CD8-positive, alpha-beta memory T cell (primary cell): ENCODE measurements at regions of chr14 and their contacts with region 1.

Region 1: GRCh38 chr14:100221533-100222223 is 17.3 kb upstream of the YY1 start:
- DNase-seq: peak; percentile 45 to 79 (median 58)
- H3K4me3 ChIP-seq: peak overlapping the region; percentile 80
- H3K4me3 Mint-ChIP-seq: no peak overlapping the region
- H3K27ac ChIP-seq: peak overlapping the region; percentile 49
- H3K27ac Mint-ChIP-seq: no peak overlapping the region
- H3K4me1 ChIP-seq: peaks cover 47% of the 10 kb centered on the region
- H3K4me1 Mint-ChIP-seq: peaks cover 5 to 6% (median 6%) of the 10 kb centered on the region in 3 donors
- H3K27me3 ChIP-seq: no peaks in the 10 kb centered on the region
- H3K27me3 Mint-ChIP-seq: no peaks in the 10 kb centered on the region

Region 2: GRCh38 chr14:100234511-100234910 is 12.8 kb after region 1 on chr14:
- CTCF ChIA-PET with region 1: interaction called, 15 read pairs
- POLR2A ChIA-PET with region 1: interaction called, 10 read pairs
- DNase-seq: peak in 1 of 5 donors; percentile 41
- H3K4me3 ChIP-seq: no peak overlapping the region
- H3K4me3 Mint-ChIP-seq: peak overlapping the region in 1 of 7 donors; percentile 75
- H3K27ac ChIP-seq: no peak overlapping the region
- H3K27ac Mint-ChIP-seq: peak overlapping the region in 7 of 8 donors; percentile 47 to 94 (median 81)
- H3K4me1 ChIP-seq: peaks cover 38% of the 10 kb centered on the region
- H3K4me1 Mint-ChIP-seq: peaks cover 32 to 52% (median 41%) of the 10 kb centered on the region in 3 donors
- H3K27me3 ChIP-seq: no peaks in the 10 kb centered on the region
- H3K27me3 Mint-ChIP-seq: peaks cover 0 to 1% of the 10 kb centered on the region in 2 donors

Region 3: DNA sequence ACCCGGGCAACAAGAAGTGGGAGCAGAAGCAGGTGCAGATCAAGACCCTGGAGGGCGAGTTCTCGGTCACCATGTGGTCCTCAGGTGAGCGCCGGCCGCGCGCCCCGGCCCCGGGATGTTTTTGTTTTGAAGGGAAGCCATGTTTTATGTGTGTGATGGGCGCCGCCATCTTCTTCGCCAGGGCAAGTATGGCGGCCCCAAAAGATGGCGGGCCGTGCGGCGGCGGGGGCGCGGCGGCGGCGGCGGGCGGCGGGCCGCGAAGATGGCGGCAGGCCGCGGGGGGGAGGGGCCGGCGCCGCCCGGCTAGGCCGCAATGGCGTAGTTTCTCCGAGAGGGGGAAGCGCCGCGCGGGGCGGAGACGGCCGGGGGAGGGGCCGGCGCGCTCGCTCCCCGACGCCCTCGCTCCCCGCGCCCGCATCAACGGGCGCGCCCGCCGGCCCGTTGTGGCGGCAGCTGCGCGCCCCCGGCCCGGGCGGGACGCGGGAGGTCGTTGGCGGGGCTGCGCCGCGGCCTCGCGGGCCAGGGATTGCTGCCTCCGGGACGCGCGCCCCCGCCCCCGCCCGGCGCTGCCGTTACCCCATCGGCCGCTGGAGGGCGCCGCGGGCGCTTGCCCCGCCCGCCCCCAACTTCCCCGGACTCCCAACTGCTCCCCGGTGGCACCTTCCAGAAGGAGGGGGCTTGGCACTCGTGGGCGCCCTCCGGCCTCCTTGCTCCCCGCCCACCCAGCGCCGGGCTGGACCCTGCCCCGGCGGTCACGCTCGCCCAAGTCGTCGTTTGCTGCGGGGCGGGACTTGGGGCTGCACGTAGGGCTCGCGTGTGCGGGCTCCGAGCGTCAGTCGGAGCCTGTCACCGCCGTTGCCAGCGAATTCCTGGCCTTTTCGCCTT is 18.4 kb after region 1 on chr14:
- CTCF ChIA-PET with region 1: interaction called, 15 read pairs
- POLR2A ChIA-PET with region 1: interaction called, 10 read pairs
- DNase-seq: peak; percentile 81 to 90 (median 84)
- H3K4me3 ChIP-seq: peak overlapping the region; percentile 72
- H3K4me3 Mint-ChIP-seq: peak overlapping the region; percentile 90 to 100 (median 93)
- H3K27ac ChIP-seq: peak overlapping the region; percentile 62
- H3K27ac Mint-ChIP-seq: peak overlapping the region; percentile 92 to 100 (median 96)
- H3K4me1 ChIP-seq: peaks cover 63% of the 10 kb centered on the region
- H3K4me1 Mint-ChIP-seq: peaks cover 49 to 70% (median 67%) of the 10 kb centered on the region in 3 donors
- H3K27me3 ChIP-seq: no peaks in the 10 kb centered on the region
- H3K27me3 Mint-ChIP-seq: peaks cover 0 to 1% of the 10 kb centered on the region in 2 donors

Region 4: DNA sequence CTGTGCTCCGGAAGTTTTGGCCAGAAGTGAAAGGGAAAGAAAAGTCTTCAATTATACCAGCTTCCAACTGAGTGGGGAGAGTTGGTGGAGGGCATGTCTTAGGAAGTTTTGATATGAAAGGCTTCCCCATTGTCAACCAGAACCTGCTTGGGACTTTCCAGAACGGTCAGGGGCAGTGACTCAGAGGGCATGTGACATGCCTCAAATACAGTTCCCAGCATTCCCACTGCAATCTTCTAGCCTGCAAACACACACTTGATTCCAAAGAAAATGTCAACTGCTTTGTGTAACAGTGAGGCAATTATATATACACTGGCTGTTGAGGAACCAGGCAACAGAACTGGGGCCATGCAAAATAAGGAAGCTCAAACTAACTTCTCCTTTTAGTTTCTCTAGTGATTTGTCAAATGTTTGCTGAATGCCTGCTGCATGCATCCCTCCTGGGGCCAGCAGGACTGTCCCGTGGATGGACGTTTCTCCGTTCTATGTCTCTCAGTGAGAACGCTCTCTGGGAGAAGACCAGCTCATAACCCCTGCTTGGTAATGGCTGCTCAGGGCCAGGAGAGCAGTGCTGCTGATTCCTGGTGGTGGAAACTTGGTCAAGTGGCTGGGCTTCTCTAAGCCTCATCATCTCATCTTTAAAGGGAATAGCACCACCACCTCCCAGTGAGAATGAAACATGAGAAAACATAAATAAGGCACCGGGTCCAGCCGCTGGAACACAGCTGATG is 119.8 kb after region 1 on chr14:
- CTCF ChIA-PET with region 1: no interaction called
- POLR2A ChIA-PET with region 1: no interaction called
- DNase-seq: no peak
- H3K4me3 ChIP-seq: no peak overlapping the region
- H3K4me3 Mint-ChIP-seq: no peak overlapping the region
- H3K27ac ChIP-seq: no peak overlapping the region
- H3K27ac Mint-ChIP-seq: peak overlapping the region in 5 of 8 donors; percentile 3 to 57 (median 42)
- H3K4me1 ChIP-seq: no peaks in the 10 kb centered on the region
- H3K4me1 Mint-ChIP-seq: peaks cover 0 to 4% (median 0%) of the 10 kb centered on the region in 3 donors
- H3K27me3 ChIP-seq: no peaks in the 10 kb centered on the region
- H3K27me3 Mint-ChIP-seq: no peaks in the 10 kb centered on the region

Region 5: DNA sequence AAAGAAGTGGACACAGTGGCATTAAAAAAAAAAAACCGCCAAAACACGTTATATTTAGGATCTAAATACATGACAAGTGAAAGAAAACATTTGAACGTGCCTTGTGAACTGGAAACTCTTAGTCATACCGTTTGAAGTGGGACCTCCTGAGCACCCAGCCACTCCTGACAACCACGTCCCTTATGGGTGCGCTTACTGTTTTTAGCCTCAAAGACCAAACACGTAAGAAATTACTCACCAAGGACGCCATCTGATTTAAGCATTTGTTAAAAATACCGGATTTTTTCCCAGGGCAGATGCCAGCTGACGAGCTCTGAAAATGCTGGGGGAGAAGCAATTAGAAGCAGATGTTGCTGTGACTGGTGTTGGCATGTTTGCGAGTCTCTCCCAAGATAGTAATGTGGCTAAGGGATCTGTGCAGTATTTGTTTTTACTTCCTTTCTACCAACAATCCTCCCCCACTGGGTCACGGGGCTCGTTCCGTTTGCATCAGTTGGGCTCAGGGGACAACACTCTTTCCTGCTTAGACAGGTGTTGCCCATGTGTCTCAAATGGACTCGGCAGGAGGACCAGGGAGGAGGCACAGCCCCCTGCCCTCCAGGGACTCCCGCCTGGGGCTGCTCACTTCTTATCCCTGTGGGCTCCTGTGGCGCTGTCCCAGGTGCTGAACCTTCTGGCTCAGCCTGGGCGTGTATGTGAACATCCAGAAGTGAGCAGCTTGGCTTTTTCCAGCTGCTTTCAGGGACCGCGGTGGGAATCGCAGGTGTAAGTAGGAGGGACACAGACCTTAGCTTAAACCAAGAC is 264.5 kb after region 1 on chr14:
- CTCF ChIA-PET with region 1: no interaction called
- POLR2A ChIA-PET with region 1: no interaction called
- DNase-seq: peak; percentile 17 to 71 (median 35)
- H3K4me3 ChIP-seq: no peak overlapping the region
- H3K4me3 Mint-ChIP-seq: no peak overlapping the region
- H3K27ac ChIP-seq: no peak overlapping the region
- H3K27ac Mint-ChIP-seq: no peak overlapping the region
- H3K4me1 ChIP-seq: peaks cover 10% of the 10 kb centered on the region
- H3K4me1 Mint-ChIP-seq: peaks cover 17 to 35% (median 26%) of the 10 kb centered on the region in 3 donors
- H3K27me3 ChIP-seq: no peaks in the 10 kb centered on the region
- H3K27me3 Mint-ChIP-seq: no peaks in the 10 kb centered on the region

Region 6: GRCh38 chr14:100522616-100523099 is 301.0 kb after region 1 on chr14:
- CTCF ChIA-PET with region 1: no interaction called
- POLR2A ChIA-PET with region 1: no interaction called
- DNase-seq: no peak
- H3K4me3 ChIP-seq: no peak overlapping the region
- H3K4me3 Mint-ChIP-seq: no peak overlapping the region
- H3K27ac ChIP-seq: no peak overlapping the region
- H3K27ac Mint-ChIP-seq: no peak overlapping the region
- H3K4me1 ChIP-seq: no peaks in the 10 kb centered on the region
- H3K4me1 Mint-ChIP-seq: no peaks in the 10 kb centered on the region
- H3K27me3 ChIP-seq: no peaks in the 10 kb centered on the region
- H3K27me3 Mint-ChIP-seq: no peaks in the 10 kb centered on the region